OCI-LY7 (cell line): ENCODE measurements at regions of chr6 and their contacts with region 1.

Region 1: DNA sequence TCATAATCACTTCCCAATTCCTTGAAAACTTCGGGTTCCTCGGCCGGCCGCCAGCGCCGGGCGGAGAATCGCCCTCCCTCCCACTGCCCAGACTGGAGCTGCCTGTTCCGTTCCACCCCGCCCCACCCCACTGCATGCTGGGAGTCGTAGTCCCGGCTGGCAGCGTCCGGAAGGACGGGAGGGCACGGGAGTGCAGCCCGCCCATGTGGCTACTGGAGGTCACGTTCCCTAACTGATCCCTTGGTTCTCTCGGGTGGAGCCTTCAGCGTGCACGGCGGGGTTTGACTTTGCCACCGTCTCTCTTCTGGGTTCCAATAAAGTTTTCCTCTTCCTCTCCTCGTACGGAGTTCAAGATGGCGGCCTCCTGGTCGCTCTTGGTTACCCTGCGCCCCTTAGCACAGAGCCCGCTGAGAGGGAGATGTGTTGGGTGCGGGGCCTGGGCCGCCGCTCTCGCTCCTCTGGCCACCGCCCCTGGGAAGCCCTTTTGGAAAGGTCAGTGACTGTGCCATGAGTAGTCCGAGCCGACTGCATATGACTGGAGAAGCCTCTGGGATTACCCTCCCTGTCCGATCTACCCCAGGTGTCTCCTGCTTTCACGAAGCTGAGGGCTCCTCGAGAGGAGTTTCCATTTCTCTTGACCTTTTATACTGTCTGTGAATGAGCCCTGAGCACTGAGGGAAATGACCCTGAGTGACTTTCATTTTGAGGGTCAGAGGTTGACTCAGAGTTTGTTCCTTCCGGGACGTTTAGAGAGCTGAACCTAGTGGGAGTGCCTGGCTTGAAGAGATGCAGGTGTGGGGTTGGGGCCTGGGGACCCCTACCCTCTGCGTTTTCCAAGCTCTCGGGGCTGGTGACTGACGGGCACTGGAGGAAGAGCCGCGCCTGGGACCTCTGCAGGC is at the start of gene AFG1L:
- DNase-seq: peak; percentile 83
- H3K4me3 ChIP-seq: peak within 1 kb of the TSS; percentile 76
- H3K27ac ChIP-seq: peak within 1 kb of the TSS; percentile 73
- H3K4me1 ChIP-seq: peaks cover 11% of the 10 kb centered on the region
- CTCF ChIP-seq: no peak
- total RNA-seq, gene AFG1L: 9.0 and 9.8 TPM in 2 replicates

Region 2: DNA sequence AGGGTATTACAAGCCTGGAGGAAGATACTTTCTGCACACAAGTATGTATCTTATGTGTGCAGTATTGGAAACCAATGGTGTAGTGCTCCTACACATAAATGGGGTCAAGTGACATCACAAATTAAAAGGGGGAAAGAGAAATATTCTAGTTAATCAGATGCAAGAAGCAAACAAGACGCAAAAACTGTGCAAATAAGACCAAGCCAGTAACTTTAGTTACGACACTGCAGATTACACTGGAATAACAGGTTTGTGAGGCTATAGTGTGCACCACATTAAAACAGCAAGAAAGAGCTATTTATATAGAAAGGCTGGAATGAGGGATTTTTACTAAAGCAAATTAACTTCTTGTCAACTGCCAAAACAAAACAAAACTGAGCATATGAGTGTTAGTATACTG is 83.3 kb before region 1 on chr6:
- CTCF ChIA-PET with region 1: no interaction called
- POLR2A ChIA-PET with region 1: no interaction called
- intact Hi-C with region 1: no loop called
- DNase-seq: no peak
- H3K4me3 ChIP-seq: no peak overlapping the region
- H3K27ac ChIP-seq: no peak overlapping the region
- H3K4me1 ChIP-seq: no peaks in the 10 kb centered on the region
- CTCF ChIP-seq: no peak

Region 3: DNA sequence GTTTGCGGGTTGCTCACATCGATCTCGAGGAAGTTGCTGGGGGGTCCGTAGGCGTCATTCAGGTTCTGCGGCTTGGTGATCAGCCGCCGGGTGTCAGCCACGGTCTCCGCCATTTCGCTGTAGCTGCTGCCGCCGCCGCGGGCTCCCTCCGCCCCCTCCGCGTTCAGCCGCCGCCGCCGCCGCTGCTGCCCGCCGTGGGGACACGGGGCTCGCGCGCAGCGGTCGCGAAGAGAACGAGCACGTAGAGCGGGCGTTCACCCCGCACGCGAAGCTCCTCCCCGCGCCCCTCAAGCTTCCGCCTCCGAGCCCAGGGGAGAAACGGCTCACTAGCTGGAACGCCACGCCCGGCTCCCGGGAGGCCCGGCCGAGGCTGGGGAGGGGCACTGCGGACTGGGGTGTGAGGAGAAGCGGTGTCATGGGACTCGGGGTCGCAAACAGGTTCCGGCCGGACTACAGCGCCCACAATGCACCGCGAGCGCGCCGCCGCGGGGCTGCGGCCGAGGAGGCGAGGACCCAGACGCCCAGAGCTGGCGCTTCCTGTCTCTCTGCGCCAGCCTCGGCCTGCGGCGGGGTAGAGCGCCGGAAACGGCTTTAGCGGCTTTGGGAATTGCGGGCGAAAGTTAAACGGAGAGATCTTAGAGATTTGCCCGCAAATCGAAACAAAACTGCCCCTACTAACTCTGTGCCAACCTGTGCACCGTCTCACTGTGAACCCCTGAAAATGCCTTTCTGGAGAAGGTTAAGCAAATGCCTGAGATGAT is 34.0 kb before region 1 on chr6 and contains the start of gene SNX3:
- CTCF ChIA-PET with region 1: no interaction called
- POLR2A ChIA-PET with region 1: interaction called, 4 read pairs
- intact Hi-C with region 1: loop called (anchors 1 kb)
- DNase-seq: peak; percentile 95
- H3K4me3 ChIP-seq: peak within 1 kb of the TSS; percentile 95
- H3K27ac ChIP-seq: peak within 1 kb of the TSS; percentile 73
- H3K4me1 ChIP-seq: peaks cover 47% of the 10 kb centered on the region
- CTCF ChIP-seq: peak; percentile 19; the same call in 1 of the 2 replicates
- total RNA-seq, gene SNX3: 67.9 and 72.9 TPM in 2 replicates

Region 4: GRCh38 chr6:108309844-108310243 is 14.9 kb after region 1 on chr6:
- CTCF ChIA-PET with region 1: no interaction called
- POLR2A ChIA-PET with region 1: interaction called, 30 read pairs
- intact Hi-C with region 1: no loop called
- DNase-seq: peak; percentile 77
- H3K4me3 ChIP-seq: peak overlapping the region; percentile 21
- H3K27ac ChIP-seq: no peak overlapping the region
- H3K4me1 ChIP-seq: peaks cover 39% of the 10 kb centered on the region
- CTCF ChIP-seq: no peak